ENCODE measurements at regions of chr1 and their contacts with region 1.

Region 1: GRCh38 chr1:183315991-183316758 is 102.0 kb downstream of the NMNAT2 start:
- DNase-seq: no peak
- ATAC-seq: no peak

Region 2: GRCh38 chr1:183281553-183282091 is 34.6 kb before region 1 on chr1:
- intact Hi-C with region 1: loop called (anchors 2 kb)
- DNase-seq: peak; percentile 95
- ATAC-seq: peak; percentile 91

Region 3: DNA sequence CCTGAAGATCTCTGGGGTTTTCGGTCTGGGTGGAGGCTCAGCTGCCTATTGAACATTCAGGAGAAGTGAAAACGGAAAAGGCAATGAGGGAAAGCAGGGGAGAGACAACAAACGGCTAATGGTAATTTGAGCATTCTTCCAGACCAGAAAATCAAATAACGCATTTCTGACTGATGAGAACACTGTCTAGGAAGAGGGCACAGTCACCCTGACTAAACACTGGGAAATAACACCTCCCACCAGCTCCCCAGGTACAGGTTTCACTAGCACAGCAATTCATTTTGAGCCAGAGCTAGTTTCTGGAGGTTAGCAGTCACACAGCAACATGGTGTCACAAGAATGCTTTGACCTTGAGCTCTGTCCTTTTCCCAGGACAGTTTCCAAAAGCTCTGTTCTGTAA is 253.0 kb after region 1 on chr1:
- intact Hi-C with region 1: no loop called
- DNase-seq: no peak
- ATAC-seq: no peak

Measured in Right ventricle myocardium superior (tissue), 1 donor.